A673 (cell line): ENCODE measurements at regions of chr3 and their contacts with region 1.

Region 1: DNA sequence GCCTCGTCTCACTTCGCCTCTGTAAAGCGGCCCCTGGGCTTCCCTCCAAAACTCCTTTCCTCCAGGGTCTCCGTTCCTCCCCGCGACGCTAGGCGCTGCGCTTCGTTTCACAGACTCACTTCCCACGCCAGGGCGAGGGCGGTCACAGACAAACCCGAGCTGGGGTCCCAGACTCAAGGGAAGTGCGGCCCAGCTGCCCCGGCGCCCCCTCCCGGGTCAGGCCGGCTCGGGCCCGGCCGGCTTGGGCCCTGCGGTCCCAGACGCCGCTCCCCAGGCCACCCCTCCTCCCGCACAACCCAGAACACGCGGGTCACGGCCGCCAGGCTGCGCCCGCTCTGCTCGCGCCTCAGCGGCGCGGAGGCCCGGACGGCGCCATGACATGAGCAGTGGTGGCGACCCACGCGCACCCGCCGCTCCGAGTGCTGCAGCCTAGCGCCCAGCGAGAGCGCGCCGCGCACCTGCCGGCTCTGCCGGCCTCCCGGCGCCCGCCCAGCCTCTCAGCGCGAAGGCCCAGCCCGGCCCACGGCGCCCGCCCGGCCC is 547 bp downstream of the NUP210 start:
- DNase-seq: no peak
- H3K4me3 ChIP-seq: peak overlapping the region; percentile 48
- H3K27ac ChIP-seq: no peak overlapping the region
- H3K4me1 ChIP-seq: peaks cover 17% of the 10 kb centered on the region
- H3K27me3 ChIP-seq: no peaks in the 10 kb centered on the region
- CTCF ChIP-seq: no peak

Region 2: GRCh38 chr3:13666781-13667709 is 247.5 kb after region 1 on chr3:
- CTCF ChIA-PET with region 1: no interaction called
- POLR2A ChIA-PET with region 1: no interaction called
- intact Hi-C with region 1: no loop called
- DNase-seq: no peak
- H3K4me3 ChIP-seq: no peak overlapping the region
- H3K27ac ChIP-seq: no peak overlapping the region
- H3K4me1 ChIP-seq: no peaks in the 10 kb centered on the region
- H3K27me3 ChIP-seq: peaks cover 5% of the 10 kb centered on the region
- CTCF ChIP-seq: no peak

Region 3: GRCh38 chr3:14577897-14578296 is 1158.3 kb after region 1 on chr3:
- CTCF ChIA-PET with region 1: no interaction called
- POLR2A ChIA-PET with region 1: interaction called, 21 read pairs
- intact Hi-C with region 1: no loop called
- DNase-seq: no peak
- H3K4me3 ChIP-seq: no peak overlapping the region
- H3K27ac ChIP-seq: no peak overlapping the region
- H3K4me1 ChIP-seq: no peaks in the 10 kb centered on the region
- H3K27me3 ChIP-seq: no peaks in the 10 kb centered on the region
- CTCF ChIP-seq: no peak